ENCODE measurements at regions of chr13 and their contacts with region 1.

Region 1: DNA sequence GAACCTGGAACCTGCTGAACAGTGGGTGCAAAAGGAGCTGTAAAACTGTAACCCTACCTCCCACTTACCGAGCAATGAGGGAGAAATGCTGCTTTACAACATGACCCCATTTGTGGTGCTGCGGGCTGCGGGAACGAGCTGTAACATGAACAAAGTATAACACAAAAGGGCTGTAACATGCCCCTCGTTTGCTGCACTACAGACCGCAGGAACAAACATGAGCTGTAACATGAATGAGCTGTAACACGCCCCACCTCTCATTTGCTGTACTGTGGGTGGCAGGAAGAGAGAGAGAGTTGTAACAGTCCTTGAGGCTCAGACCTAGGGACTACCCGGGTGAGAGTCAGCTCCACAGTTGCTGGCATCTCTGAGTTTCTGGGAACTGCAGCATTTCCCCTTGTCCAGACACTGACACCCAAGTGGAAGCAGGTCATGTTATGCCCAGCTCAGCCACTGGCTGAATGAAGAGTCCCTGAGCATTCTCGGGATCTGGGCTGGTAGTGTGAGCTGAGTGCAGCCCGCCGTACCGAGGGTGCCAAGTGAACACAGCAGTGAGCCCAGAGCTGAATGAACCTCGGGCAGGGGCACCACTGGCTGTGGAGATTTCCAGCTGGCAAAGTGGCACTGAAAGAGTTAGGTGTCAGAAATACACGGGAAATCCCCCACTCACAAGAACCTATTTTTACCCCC is 1385.3 kb upstream of the SPRY2 start:
- DNase-seq: no peak
- H3K4me3 Mint-ChIP-seq: no peak overlapping the region
- H3K27ac Mint-ChIP-seq: no peak overlapping the region
- H3K4me1 Mint-ChIP-seq: no peaks in the 10 kb centered on the region
- H3K27me3 Mint-ChIP-seq: no peaks in the 10 kb centered on the region

Region 2: DNA sequence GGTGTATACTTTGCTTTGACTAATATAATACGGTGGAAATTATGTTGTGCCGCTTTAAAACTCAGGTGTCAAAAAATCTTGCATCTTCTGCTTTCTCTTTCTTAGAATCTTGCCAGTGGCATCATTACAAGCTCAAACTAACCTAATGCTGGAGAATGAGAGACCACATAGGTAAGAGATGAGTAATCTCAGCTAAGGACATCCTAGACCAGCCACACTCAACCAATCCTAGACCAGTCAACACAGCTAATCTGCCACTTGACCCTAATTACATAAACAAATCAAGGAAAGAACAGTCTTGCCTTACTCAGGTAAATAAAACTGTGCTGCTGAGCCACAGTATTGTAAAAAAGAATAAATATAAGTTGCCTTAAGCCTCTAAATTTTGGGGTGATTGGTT is 61.3 kb before region 1 on chr13:
- CTCF ChIA-PET with region 1: no interaction called
- POLR2A ChIA-PET with region 1: no interaction called
- intact Hi-C with region 1: loop called (anchors 10 kb)
- DNase-seq: no peak
- H3K4me3 Mint-ChIP-seq: no peak overlapping the region
- H3K27ac Mint-ChIP-seq: no peak overlapping the region
- H3K4me1 Mint-ChIP-seq: no peaks in the 10 kb centered on the region
- H3K27me3 Mint-ChIP-seq: no peaks in the 10 kb centered on the region